ENCODE measurements at regions of chr20 and their contacts with region 1.

Region 1: DNA sequence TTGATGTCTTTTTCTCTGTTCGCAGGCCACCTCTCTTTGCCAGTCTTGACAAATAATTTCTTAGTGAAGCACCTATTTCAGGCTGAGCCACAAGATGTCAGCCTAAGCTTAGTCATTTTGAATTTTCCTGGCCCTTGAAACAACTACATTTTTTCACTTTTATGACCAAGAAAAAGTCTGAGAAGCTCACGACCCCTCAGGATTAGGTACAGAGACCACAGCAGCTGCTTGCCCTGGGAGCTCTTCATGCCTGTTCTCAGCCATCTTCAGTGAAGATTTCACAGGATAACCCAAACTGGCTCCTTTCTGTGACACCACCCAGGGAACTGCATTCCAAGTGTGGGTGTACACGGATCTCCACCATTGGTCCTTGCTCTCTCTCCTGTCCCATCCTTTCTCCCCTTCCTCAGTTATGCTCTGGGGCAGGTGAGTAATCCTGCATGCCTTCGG is 38.4 kb upstream of the SPTLC3 start:
- DNase-seq: no peak
- ATAC-seq: peak in 2 of 4 donors; percentile 37 to 46
- H3K4me3 ChIP-seq: no peak overlapping the region
- H3K27ac ChIP-seq: no peak overlapping the region
- H3K4me1 ChIP-seq: no peaks in the 10 kb centered on the region
- H3K27me3 ChIP-seq: no peaks in the 10 kb centered on the region
- CTCF ChIP-seq: peak; percentile 43 to 73 (median 60)
- POLR2A ChIP-seq: no peak

Region 2: GRCh38 chr20:11676630-11677284 is 1293.6 kb before region 1 on chr20:
- intact Hi-C with region 1: loop called in 1 of 10 experiments (anchors 10 kb)
- DNase-seq: peak; percentile 26 to 58 (median 48)
- ATAC-seq: peak in 3 of 4 donors; percentile 90 to 95 (median 90)
- H3K4me3 ChIP-seq: no peak overlapping the region
- H3K27ac ChIP-seq: no peak overlapping the region
- H3K4me1 ChIP-seq: peaks cover 0 to 22% (median 0%) of the 10 kb centered on the region in 12 donors
- H3K27me3 ChIP-seq: no peaks in the 10 kb centered on the region
- CTCF ChIP-seq: peak; percentile 72 to 92 (median 81)
- POLR2A ChIP-seq: no peak

Region 3: DNA sequence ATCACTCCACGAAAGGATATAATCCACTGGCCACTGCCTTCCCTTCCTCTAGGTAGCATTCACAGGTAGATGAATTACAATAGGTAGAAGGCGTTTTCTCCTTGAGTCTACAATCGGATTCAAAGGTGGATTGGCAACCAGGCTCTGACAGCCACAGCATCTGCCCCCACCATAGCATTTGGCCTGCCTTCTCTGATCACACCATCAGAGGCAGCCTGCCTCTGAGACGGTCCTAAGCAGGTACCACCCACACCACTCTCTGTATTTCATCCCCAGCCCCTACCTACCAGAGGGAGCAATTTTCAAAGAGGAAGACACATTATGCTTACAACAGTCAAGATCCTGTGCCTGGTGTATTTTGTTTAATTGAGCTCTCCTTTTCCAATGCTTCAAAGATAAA is 172.1 kb before region 1 on chr20:
- intact Hi-C with region 1: no loop called
- DNase-seq: no peak
- ATAC-seq: no peak
- H3K4me3 ChIP-seq: no peak overlapping the region
- H3K27ac ChIP-seq: no peak overlapping the region
- H3K4me1 ChIP-seq: no peaks in the 10 kb centered on the region
- H3K27me3 ChIP-seq: no peaks in the 10 kb centered on the region
- CTCF ChIP-seq: no peak
- POLR2A ChIP-seq: no peak

Region 4: GRCh38 chr20:12925214-12925755 is 45.1 kb before region 1 on chr20:
- intact Hi-C with region 1: loop called in 2 of 10 experiments (anchors 5 kb)
- DNase-seq: peak in 3 of 5 donors; percentile 30 to 36 (median 33)
- ATAC-seq: peak; percentile 71 to 94 (median 86)
- H3K4me3 ChIP-seq: peak overlapping the region in 1 of 12 donors; percentile 22
- H3K27ac ChIP-seq: no peak overlapping the region
- H3K4me1 ChIP-seq: peaks cover 0 to 5% (median 0%) of the 10 kb centered on the region in 12 donors
- H3K27me3 ChIP-seq: no peaks in the 10 kb centered on the region
- CTCF ChIP-seq: peak; percentile 65 to 88 (median 73)
- POLR2A ChIP-seq: no peak

Region 5: DNA sequence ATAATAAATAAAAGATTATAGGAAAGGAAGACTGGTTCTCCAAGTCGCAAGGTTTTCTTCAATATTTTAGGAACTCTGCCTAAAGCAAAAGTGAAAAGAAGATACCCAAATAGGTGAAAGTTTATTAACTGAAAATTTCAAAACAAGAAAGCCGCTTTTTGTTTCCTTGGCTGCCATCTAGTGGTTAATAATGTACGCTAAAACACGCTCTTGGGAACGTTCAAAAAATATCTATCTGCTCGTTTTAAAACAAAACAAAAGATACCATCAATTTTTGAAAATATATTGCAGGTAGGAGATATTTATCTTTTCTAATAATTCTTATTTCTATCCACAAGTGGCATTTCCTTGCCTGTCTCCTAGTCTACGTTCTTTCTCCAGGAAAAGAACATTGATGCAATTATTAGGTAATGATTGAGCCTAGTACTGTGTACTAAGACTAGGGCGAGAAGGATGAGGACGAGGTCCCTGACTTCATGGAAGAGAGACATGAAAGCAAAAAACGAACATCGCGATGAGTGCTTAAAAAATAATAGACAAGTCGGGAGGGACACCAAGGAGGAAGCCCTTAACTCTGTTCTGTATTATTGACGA is 135.6 kb after region 1 on chr20:
- intact Hi-C with region 1: loop called (anchors 1 to 2 kb)
- DNase-seq: no peak
- ATAC-seq: no peak
- H3K4me3 ChIP-seq: no peak overlapping the region
- H3K27ac ChIP-seq: no peak overlapping the region
- H3K4me1 ChIP-seq: peaks cover 0 to 11% (median 0%) of the 10 kb centered on the region in 12 donors
- H3K27me3 ChIP-seq: no peaks in the 10 kb centered on the region
- CTCF ChIP-seq: peak; percentile 71 to 88 (median 78)
- POLR2A ChIP-seq: no peak

Region 6: GRCh38 chr20:13302647-13303450 is 332.5 kb after region 1 on chr20:
- intact Hi-C with region 1: loop called in 1 of 10 experiments (anchors 5 kb)
- DNase-seq: no peak
- ATAC-seq: peak in 3 of 4 donors; percentile 47 to 82 (median 54)
- H3K4me3 ChIP-seq: no peak overlapping the region
- H3K27ac ChIP-seq: no peak overlapping the region
- H3K4me1 ChIP-seq: no peaks in the 10 kb centered on the region
- H3K27me3 ChIP-seq: no peaks in the 10 kb centered on the region
- CTCF ChIP-seq: peak; percentile 39 to 65 (median 52)
- POLR2A ChIP-seq: no peak